AG04450 (cell line): ENCODE measurements at regions of chr17 and their contacts with region 1.

Region 1: DNA sequence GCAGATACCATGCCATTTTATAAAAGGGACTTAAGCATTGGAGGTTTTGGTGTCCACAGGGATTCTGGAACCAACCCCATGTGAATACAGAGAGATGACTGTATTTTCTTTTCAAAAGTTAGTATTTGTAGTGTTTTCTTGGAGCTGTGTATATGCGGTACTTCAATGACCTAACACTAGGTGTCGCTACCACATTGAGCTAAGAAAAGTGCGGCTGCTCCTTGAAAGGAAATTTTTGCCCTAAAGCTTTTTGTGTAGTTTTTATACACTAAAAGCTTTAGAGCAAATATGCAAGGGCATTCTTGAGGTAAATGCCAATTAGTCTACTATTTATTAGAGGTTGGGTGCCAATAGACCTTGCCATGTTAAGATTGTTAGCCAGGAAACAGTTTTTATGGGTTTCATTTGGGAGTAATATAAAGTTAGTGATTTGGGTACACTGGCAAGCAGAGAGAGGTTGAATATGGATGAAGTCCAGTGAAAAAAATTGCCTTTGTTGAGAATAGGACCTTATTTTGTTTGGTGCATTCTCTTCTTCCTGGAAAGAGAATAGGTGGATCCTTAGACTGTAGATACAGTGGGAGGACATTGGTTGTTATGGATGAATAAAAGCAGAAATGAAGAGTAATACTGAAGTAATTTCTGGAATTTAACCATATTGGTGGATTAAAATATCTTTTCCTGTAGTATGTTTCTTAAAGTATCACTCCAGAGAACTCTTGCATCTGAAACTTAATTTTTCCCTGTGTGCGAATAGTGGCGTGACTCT is 43.3 kb downstream of the BCAS3 start:
- DNase-seq: peak; percentile 55
- H3K4me3 ChIP-seq: no peak overlapping the region
- H3K27ac ChIP-seq: no peak overlapping the region
- H3K27me3 ChIP-seq: no peaks in the 10 kb centered on the region
- CTCF ChIP-seq: peak; percentile 90

Region 2: DNA sequence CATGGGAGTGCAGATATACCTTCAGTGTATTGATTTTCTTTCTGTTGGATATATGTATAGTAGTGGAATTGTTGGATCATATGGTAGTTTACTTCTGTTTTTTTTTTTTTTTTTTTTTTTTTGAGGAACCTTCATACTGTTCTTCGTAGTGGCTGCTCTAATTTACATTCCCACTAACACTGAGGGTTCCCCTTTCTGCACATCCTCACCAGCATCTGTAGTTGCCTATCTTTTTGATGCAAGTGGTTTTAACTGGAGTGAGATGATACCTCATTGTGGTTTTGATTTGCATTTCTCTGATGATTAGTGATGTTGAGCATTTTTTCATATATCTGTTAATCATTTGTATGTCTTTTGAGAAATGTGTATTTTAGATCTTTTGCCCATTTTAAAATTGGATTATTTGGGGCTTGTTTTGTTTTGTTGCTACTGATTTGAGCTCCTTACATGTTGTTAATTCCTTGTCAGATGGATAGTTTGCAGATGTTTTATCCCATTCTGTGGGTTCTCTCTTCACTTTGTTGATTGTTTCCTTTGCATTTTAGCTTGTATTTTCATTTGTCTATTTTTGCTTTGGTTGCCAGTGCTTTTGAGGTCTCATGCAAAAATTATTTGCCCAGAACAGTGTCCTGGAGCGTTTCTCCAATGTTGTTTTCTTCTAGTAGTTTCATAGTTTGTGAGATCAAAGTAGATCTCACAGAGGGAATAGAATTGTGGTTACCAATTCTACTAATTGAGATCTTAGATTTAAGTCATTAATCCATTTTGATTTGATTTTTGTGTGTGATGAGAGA is 68.3 kb before region 1 on chr17:
- CTCF ChIA-PET with region 1: no interaction called
- POLR2A ChIA-PET with region 1: no interaction called
- DNase-seq: no peak
- H3K4me3 ChIP-seq: no peak overlapping the region
- H3K27ac ChIP-seq: no peak overlapping the region
- H3K27me3 ChIP-seq: no peaks in the 10 kb centered on the region
- CTCF ChIP-seq: no peak

Region 3: DNA sequence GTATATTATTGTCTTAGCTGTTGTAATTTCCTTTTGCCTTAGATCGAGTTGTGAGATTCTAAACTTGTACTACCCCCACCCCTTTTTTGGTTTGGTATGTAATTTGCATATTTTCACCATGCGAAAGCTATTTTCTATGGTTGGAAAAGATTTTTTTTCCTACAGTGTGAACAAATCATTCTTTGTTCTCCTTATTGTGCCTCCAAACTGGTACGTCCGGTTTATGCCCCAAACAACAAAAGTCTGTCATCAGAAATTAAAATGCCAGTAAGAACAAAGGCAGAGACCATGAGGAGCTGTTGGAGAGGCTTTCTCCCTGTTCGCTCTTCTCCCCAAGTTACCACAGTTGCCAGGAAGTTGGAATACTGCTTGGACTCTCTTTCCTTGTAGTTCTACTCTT is 22.9 kb after region 1 on chr17:
- CTCF ChIA-PET with region 1: interaction called, 15 read pairs
- POLR2A ChIA-PET with region 1: no interaction called
- DNase-seq: peak; percentile 10
- H3K4me3 ChIP-seq: peak overlapping the region; percentile 21
- H3K27ac ChIP-seq: peak overlapping the region; percentile 65
- H3K27me3 ChIP-seq: no peaks in the 10 kb centered on the region
- CTCF ChIP-seq: no peak

Region 4: GRCh38 chr17:60971515-60972369 is 250.8 kb after region 1 on chr17:
- CTCF ChIA-PET with region 1: interaction called, 18 read pairs
- POLR2A ChIA-PET with region 1: no interaction called
- DNase-seq: peak; percentile 52
- H3K4me3 ChIP-seq: no peak overlapping the region
- H3K27ac ChIP-seq: no peak overlapping the region
- H3K27me3 ChIP-seq: no peaks in the 10 kb centered on the region
- CTCF ChIP-seq: peak; percentile 79

Region 5: DNA sequence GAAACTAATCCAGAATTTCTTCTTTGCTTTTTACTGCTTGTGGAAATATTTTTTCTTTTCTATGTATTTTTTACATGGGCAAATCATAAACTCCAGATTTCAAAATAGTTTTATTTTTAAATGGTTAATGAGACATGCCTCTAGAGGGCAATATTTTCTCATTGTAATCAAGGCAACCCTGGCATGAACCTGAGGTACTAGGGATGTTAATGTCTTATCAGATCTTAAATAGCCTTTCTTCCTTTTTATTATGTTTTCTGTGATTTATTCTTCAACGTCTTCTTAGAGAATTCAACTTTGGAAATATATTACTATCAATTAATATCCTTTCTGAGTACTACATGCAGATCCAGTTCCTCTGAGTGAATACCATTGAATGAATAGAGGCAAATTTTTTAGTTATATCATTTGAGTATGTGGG is 281.4 kb after region 1 on chr17:
- CTCF ChIA-PET with region 1: interaction called, 14 read pairs
- POLR2A ChIA-PET with region 1: no interaction called
- DNase-seq: peak; percentile 27
- H3K4me3 ChIP-seq: no peak overlapping the region
- H3K27ac ChIP-seq: no peak overlapping the region
- H3K27me3 ChIP-seq: no peaks in the 10 kb centered on the region
- CTCF ChIP-seq: peak; percentile 60